CD14-positive monocyte (primary cell): ENCODE measurements at regions of chr12 and their contacts with region 1.

Region 1: DNA sequence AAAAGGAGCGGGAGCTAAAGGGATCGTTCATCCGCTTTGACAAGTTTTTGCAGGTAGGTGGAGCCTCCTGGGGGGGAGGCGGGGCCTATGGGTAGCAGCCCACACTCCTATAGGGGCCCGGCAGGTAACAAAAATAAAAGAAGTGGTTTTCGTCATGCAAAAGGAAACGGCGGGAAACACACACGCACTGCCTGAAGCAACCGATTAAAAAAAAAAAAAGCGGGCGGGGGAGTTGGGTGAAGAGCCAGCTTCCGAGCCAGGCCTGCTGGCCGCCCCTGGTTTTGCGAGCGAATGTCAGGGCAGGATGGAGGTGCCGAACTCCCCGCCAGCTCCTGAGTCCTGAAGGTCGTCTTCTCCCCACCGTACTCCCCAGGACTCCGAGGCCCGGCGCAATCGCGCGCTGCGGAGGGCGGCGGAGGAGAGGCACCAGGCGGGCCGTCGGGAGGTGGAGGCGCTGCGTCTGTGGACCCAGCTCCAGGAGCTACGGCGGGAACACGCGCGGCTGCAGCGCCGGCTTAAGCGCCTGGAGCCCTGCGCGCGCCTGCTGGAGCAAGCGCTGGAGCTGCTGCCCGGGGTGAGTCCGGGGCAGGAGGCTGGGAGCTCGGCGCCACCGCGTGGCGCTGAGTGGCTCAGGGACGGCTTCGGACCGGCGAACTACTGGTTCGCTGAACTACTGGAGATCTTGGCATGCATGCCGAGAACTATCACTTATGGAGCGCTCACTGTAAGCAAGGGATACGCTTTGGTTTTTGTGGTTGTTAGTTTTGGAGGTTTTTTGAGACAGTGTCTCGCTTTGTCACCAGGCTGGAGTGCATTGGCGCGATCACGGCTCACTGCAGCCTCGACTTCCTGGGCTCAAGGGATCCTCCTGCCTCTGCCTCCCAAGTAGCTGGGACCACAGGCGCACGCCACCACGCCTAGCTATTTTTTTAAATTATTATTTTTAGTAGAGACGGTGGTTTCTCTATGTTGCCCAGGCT is 3.6 kb downstream of the CFAP73 start:
- DNase-seq: peak; percentile 71 to 75 (median 73)
- H3K4me3 ChIP-seq: peak overlapping the region; percentile 7 to 75 (median 37)
- H3K4me3 Mint-ChIP-seq: peak overlapping the region; percentile 73 to 83
- H3K27ac ChIP-seq: no peak overlapping the region
- H3K27ac Mint-ChIP-seq: no peak overlapping the region
- H3K4me1 ChIP-seq: peaks cover 13 to 34% of the 10 kb centered on the region in 2 donors
- H3K4me1 Mint-ChIP-seq: peaks cover 30% of the 10 kb centered on the region
- H3K27me3 ChIP-seq: peaks cover 31 to 64% of the 10 kb centered on the region in 2 donors
- H3K27me3 Mint-ChIP-seq: peaks cover 64 to 76% (median 72%) of the 10 kb centered on the region in 3 donors
- CTCF ChIP-seq: peak; percentile 59

Region 2: DNA sequence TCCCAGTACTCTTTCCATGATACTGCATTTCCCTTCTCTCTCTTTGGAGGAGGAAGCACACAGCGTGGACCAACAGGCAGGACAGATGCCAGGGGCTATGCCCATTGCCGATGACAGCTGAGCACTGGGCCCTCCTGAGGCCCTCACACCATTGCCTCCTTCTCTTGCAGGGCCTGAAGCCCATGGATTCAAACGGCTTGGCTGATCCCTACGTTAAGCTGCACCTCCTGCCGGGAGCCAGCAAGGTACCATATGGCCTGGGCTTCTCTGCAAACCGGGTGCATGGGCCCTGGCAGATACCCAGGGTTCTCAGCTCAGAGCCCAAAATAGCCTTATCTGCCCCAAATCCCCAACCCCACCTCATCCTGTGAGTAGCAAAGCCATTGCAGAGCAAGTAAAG is 271.5 kb before region 1 on chr12:
- intact Hi-C with region 1: loop called in 1 of 2 experiments (anchors 10 kb)
- DNase-seq: no peak
- H3K4me3 ChIP-seq: no peak overlapping the region
- H3K4me3 Mint-ChIP-seq: no peak overlapping the region
- H3K27ac ChIP-seq: no peak overlapping the region
- H3K27ac Mint-ChIP-seq: no peak overlapping the region
- H3K4me1 ChIP-seq: peaks cover 12 to 13% of the 10 kb centered on the region in 2 donors
- H3K4me1 Mint-ChIP-seq: peaks cover 12% of the 10 kb centered on the region
- H3K27me3 ChIP-seq: peaks cover 5 to 11% of the 10 kb centered on the region in 2 donors
- H3K27me3 Mint-ChIP-seq: peaks cover 8 to 30% (median 20%) of the 10 kb centered on the region in 3 donors
- CTCF ChIP-seq: no peak